Right ventricle myocardium inferior (tissue), 1 donor: ENCODE measurements at regions of chr19 and their contacts with region 1.

Region 1: GRCh38 chr19:36152352-36153091 is at the start of gene COX7A1:
- DNase-seq: peak; percentile 87
- ATAC-seq: peak; percentile 91
- total RNA-seq, gene COX7A1: 3,337 TPM

Region 2: DNA sequence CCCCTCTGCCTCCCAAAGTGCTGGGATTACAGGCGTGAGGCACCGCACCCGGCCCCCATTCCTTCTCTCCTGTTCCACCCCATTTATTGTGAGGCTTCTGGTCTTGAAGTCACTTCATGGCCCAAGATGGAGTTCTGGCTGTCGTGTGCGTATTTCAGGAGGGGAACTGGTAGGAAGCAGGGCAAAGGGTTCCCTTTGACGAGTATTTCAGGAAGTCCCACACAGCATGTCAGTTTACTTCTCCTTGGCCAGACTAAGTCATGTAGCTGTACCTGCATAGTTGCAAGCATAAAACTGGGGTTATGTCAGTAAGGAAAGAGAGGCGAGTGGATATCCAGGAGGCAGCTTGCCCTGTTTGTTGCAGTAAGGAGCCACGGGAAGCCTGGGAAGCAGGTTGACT is 87.7 kb before region 1 on chr19:
- intact Hi-C with region 1: no loop called
- DNase-seq: no peak
- ATAC-seq: no peak

Region 3: DNA sequence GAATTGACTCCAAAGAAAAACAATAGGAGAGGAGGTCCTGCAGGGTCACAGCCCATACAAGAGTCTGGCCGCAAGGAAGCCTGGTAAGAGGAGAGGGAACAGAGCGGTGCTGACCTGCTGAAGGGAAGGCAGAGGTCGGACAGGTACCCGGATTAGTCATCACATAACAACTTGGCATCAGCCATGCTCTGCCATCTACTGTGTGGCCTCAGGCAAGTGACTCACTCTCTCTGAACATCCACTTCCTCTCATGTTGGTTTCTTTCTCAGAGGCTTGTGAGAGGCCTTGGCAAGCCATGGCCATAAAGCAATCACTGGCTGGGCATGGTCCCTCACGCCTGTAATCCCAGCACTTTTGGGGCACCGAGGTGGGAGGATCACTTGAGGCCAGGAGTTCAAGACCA is 20.0 kb before region 1 on chr19:
- intact Hi-C with region 1: loop called (anchors 1 kb)
- DNase-seq: no peak
- ATAC-seq: no peak

Region 4: DNA sequence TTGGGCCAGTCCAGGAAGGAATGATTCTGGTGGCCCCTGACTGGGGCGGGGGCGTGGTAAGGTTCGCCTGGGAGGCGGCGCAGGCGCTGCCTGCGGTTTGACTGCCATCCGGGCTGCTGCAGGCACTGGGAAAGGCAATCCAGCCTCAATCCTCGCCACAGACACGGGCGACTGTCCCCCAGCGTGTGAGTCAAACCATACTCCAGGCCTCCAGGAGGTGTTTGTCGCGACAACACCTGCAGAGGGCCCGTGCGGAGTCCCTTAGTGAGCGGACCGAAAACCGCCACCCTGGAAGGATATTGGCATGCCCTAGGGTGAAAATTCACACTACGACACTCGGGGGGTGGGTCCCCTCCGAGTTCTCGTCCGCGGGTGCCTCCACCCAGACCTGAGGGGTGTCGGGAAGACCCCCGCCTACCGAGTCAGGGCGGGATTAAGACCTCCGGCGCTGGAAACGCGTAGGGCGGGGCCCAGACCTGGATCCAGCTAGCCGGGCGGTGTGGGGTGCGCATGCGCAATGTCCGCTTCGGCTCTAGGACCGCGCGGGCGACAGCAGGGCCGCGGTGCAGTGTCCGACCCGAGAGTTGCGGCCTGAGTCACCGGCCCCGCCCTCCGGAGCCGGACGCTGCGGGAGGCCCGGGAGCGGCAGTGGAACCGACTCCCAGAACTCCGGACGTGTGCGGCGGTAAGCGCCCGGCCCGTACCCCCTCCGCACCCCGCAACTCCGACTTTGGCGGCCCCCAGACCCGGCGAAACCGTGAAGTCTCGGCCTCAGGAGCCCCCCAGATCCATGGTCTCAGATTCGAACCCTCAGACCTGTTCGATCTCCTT is 12.8 kb before region 1 on chr19 and contains the start of gene CAPNS1:
- intact Hi-C with region 1: loop called (anchors 1 kb)
- DNase-seq: peak; percentile 99
- ATAC-seq: peak; percentile 93
- total RNA-seq, gene CAPNS1: 854 TPM